Posterior vena cava (tissue), 2 donors: ENCODE measurements at regions of chr11 and their contacts with region 1.

Region 1: GRCh38 chr11:125281831-125282595 is 117.5 kb downstream of the PKNOX2 start:
- DNase-seq: no peak

Region 2: DNA sequence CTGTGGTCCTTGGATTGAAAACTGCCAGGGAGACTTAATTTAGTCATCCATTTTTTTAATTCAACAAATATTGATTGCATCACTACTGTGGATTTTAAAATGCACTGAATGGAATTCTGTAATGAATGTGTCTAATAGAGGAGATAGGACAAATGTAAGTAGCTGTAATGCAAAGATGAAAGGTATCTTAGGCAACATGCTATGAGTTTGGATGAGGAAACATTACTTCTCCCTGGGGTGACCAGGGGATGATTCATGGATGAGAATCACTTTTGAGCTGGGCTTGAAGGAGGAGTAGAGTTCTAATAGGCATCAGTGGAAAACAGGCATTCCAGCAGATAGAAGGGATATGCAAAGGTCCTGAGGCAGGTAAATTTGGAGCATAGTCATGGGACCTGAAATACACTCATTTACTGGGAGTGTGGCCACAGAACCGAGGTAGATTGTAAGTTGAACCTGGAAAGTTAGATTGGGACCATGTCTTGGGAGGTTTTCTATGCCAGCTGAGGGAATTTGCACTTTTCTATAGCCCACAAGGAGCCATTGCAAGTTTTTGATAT is 74.1 kb before region 1 on chr11:
- intact Hi-C with region 1: loop called in 1 of 2 experiments (anchors 2 kb)
- DNase-seq: peak; percentile 5

Region 3: GRCh38 chr11:125382314-125382791 is 100.3 kb after region 1 on chr11:
- intact Hi-C with region 1: no loop called
- DNase-seq: peak; percentile 8